ENCODE measurements at regions of chr1 and their contacts with region 1.

Region 1: GRCh38 chr1:151968058-151968457 is 25.6 kb downstream of the S100A10 start:
- DNase-seq: peak in 8 of 9 donors; percentile 39 to 76 (median 68)
- ATAC-seq: peak; percentile 93
- H3K4me3 ChIP-seq: no peak overlapping the region
- H3K4me3 Mint-ChIP-seq: no peak overlapping the region
- H3K27ac ChIP-seq: no peak overlapping the region
- H3K27ac Mint-ChIP-seq: no peak overlapping the region
- H3K4me1 ChIP-seq: peaks cover 4 to 5% of the 10 kb centered on the region in 2 donors
- H3K4me1 Mint-ChIP-seq: peaks cover 5 to 20% (median 7%) of the 10 kb centered on the region in 7 donors
- H3K27me3 ChIP-seq: no peaks in the 10 kb centered on the region
- H3K27me3 Mint-ChIP-seq: peaks cover 0 to 20% (median 0%) of the 10 kb centered on the region in 5 donors

Region 2: DNA sequence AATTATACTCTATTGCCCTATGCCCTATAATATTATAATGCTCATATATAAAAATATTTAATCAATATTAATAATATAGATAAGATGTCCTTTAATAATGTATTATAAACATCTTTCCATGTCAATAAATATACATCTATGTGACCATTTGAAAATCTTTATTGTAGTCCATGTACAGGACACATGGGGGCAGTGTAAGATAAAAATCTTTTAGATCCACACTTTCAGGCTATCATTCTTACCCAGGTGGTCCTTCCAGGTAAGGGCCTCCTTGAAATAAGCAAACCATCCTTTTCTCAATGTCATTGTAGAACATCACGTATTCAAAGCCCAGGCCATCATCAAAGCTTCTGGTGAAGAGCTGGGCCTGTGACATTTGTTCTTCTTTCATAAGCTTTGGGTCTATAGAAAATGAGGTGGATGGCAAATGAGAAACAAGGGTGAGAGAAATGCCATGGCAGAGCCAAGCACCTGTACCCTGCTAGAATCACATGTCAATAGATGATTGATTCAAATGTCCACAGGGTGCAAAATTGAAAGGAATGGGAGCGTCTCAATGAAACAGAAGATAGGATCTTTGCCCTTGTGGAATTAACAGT is 79.0 kb before region 1 on chr1:
- CTCF ChIA-PET with region 1: interaction called, 18 read pairs
- POLR2A ChIA-PET with region 1: interaction called, 3 read pairs
- intact Hi-C with region 1: loop called (anchors 1 to 10 kb)
- DNase-seq: peak in 5 of 9 donors; percentile 27 to 48 (median 37)
- ATAC-seq: peak; percentile 68
- H3K4me3 ChIP-seq: no peak overlapping the region
- H3K4me3 Mint-ChIP-seq: no peak overlapping the region
- H3K27ac ChIP-seq: no peak overlapping the region
- H3K27ac Mint-ChIP-seq: peak overlapping the region in 7 of 9 donors; percentile 7 to 91 (median 70)
- H3K4me1 ChIP-seq: peaks cover 0 to 12% of the 10 kb centered on the region in 2 donors
- H3K4me1 Mint-ChIP-seq: peaks cover 18 to 40% (median 38%) of the 10 kb centered on the region in 7 donors
- H3K27me3 ChIP-seq: no peaks in the 10 kb centered on the region
- H3K27me3 Mint-ChIP-seq: no peaks in the 10 kb centered on the region

Region 3: GRCh38 chr1:151934048-151934493 is 34.0 kb before region 1 on chr1:
- CTCF ChIA-PET with region 1: interaction called, 11 read pairs
- POLR2A ChIA-PET with region 1: interaction called, 4 read pairs
- intact Hi-C with region 1: loop called (anchors 1 to 2 kb)
- DNase-seq: peak in 7 of 9 donors; percentile 31 to 69 (median 59)
- ATAC-seq: peak; percentile 94
- H3K4me3 ChIP-seq: no peak overlapping the region
- H3K4me3 Mint-ChIP-seq: peak overlapping the region in 1 of 10 donors; percentile 49
- H3K27ac ChIP-seq: no peak overlapping the region
- H3K27ac Mint-ChIP-seq: peak overlapping the region in 1 of 9 donors; percentile 41
- H3K4me1 ChIP-seq: no peaks in the 10 kb centered on the region
- H3K4me1 Mint-ChIP-seq: peaks cover 0 to 6% (median 4%) of the 10 kb centered on the region in 7 donors
- H3K27me3 ChIP-seq: no peaks in the 10 kb centered on the region
- H3K27me3 Mint-ChIP-seq: peaks cover 0 to 33% (median 0%) of the 10 kb centered on the region in 5 donors

Region 4: DNA sequence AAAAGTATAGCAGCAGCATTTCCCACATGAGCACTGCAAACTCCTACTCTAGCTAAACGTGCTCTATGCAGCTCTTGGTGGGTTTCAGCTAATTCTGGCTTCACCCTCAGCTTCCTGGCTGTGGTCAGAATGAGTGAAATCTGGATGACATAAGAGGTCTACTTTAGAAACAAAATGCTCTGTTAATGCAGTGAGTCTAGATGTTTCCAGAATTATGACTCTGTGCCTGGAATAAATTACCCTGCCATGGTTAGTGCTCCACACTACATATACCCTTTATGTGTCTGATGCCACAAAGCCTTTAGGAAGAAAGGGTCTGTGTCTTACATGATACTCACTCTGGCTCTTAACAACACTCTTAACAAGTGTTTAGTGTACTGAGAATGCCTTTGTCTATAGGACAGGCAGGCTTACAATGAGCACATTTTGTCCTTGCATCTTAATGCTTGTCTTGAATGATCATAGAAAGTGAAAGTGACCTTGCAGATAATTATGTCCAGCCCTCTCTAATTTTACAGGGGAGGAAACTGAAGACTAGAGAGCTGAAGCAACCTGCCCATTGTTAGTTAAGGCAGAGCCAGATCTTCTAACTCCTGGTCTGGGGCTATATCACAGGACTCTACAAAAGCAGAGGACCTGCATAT is 16.4 kb after region 1 on chr1:
- CTCF ChIA-PET with region 1: interaction called, 19 read pairs
- POLR2A ChIA-PET with region 1: interaction called, 3 read pairs
- intact Hi-C with region 1: loop called in 1 of 2 experiments (anchors 1 kb)
- DNase-seq: peak in 1 of 9 donors; percentile 40
- ATAC-seq: peak; percentile 31
- H3K4me3 ChIP-seq: no peak overlapping the region
- H3K4me3 Mint-ChIP-seq: peak overlapping the region in 1 of 10 donors; percentile 76
- H3K27ac ChIP-seq: no peak overlapping the region
- H3K27ac Mint-ChIP-seq: peak overlapping the region in 6 of 9 donors; percentile 47 to 83 (median 64)
- H3K4me1 ChIP-seq: peaks cover 0 to 33% of the 10 kb centered on the region in 2 donors
- H3K4me1 Mint-ChIP-seq: peaks cover 32 to 60% (median 34%) of the 10 kb centered on the region in 7 donors
- H3K27me3 ChIP-seq: no peaks in the 10 kb centered on the region
- H3K27me3 Mint-ChIP-seq: no peaks in the 10 kb centered on the region

Region 5: GRCh38 chr1:152001391-152002249 is 33.6 kb after region 1 on chr1:
- CTCF ChIA-PET with region 1: interaction called, 205 read pairs
- POLR2A ChIA-PET with region 1: interaction called, 15 read pairs
- intact Hi-C with region 1: loop called (anchors 1 kb)
- DNase-seq: peak; percentile 51 to 70 (median 67)
- ATAC-seq: peak; percentile 83
- H3K4me3 ChIP-seq: no peak overlapping the region
- H3K4me3 Mint-ChIP-seq: no peak overlapping the region
- H3K27ac ChIP-seq: no peak overlapping the region
- H3K27ac Mint-ChIP-seq: peak overlapping the region in 1 of 9 donors; percentile 62
- H3K4me1 ChIP-seq: no peaks in the 10 kb centered on the region
- H3K4me1 Mint-ChIP-seq: peaks cover 0 to 16% (median 0%) of the 10 kb centered on the region in 7 donors
- H3K27me3 ChIP-seq: no peaks in the 10 kb centered on the region
- H3K27me3 Mint-ChIP-seq: peaks cover 0 to 42% (median 0%) of the 10 kb centered on the region in 5 donors

Region 6: GRCh38 chr1:152013664-152014237 is 45.7 kb after region 1 on chr1:
- CTCF ChIA-PET with region 1: interaction called, 4 read pairs
- POLR2A ChIA-PET with region 1: no interaction called
- intact Hi-C with region 1: loop called in 1 of 2 experiments (anchors 1 kb)
- DNase-seq: peak in 2 of 9 donors; percentile 19 to 43
- ATAC-seq: peak; percentile 42
- H3K4me3 ChIP-seq: no peak overlapping the region
- H3K4me3 Mint-ChIP-seq: no peak overlapping the region
- H3K27ac ChIP-seq: no peak overlapping the region
- H3K27ac Mint-ChIP-seq: no peak overlapping the region
- H3K4me1 ChIP-seq: no peaks in the 10 kb centered on the region
- H3K4me1 Mint-ChIP-seq: peaks cover 0 to 6% (median 4%) of the 10 kb centered on the region in 7 donors
- H3K27me3 ChIP-seq: no peaks in the 10 kb centered on the region
- H3K27me3 Mint-ChIP-seq: peaks cover 0 to 58% (median 9%) of the 10 kb centered on the region in 5 donors

Region 7: DNA sequence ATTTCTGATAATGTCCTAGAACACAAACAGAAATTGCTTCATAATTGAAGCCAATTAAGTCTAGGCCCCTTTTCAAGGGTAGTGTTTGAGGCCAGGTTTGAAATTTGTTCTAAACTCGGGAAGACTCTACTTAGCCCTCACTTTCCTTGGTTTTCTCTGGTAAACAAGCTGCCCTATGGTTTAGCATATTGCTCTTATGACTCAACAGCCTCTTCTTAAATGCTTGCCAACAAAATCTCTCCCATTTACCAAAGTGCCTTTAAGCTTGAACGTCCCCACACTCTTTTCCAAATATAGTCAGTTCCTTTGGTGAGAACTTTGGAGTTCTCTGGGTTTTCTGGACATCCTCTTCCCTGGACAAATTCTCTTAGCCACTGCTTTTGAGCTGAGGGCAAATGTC is 868.8 kb after region 1 on chr1:
- CTCF ChIA-PET with region 1: no interaction called
- POLR2A ChIA-PET with region 1: no interaction called
- intact Hi-C with region 1: no loop called
- DNase-seq: no peak
- ATAC-seq: no peak
- H3K4me3 ChIP-seq: no peak overlapping the region
- H3K4me3 Mint-ChIP-seq: no peak overlapping the region
- H3K27ac ChIP-seq: no peak overlapping the region
- H3K27ac Mint-ChIP-seq: no peak overlapping the region
- H3K4me1 ChIP-seq: no peaks in the 10 kb centered on the region
- H3K4me1 Mint-ChIP-seq: no peaks in the 10 kb centered on the region
- H3K27me3 ChIP-seq: no peaks in the 10 kb centered on the region
- H3K27me3 Mint-ChIP-seq: peaks cover 5 to 35% (median 9%) of the 10 kb centered on the region in 5 donors

Region 8: GRCh38 chr1:153494976-153495535 is 1527.0 kb after region 1 on chr1:
- CTCF ChIA-PET with region 1: no interaction called
- POLR2A ChIA-PET with region 1: no interaction called
- intact Hi-C with region 1: no loop called
- DNase-seq: peak; percentile 40 to 78 (median 58)
- ATAC-seq: peak; percentile 84
- H3K4me3 ChIP-seq: no peak overlapping the region
- H3K4me3 Mint-ChIP-seq: no peak overlapping the region
- H3K27ac ChIP-seq: no peak overlapping the region
- H3K27ac Mint-ChIP-seq: no peak overlapping the region
- H3K4me1 ChIP-seq: no peaks in the 10 kb centered on the region
- H3K4me1 Mint-ChIP-seq: peaks cover 0 to 8% (median 0%) of the 10 kb centered on the region in 7 donors
- H3K27me3 ChIP-seq: peaks cover 0 to 3% of the 10 kb centered on the region in 2 donors
- H3K27me3 Mint-ChIP-seq: peaks cover 9 to 45% (median 21%) of the 10 kb centered on the region in 5 donors